ENCODE measurements at regions of chr11 and their contacts with region 1.

Region 1: GRCh38 chr11:5690216-5690615 is 626 bp downstream of the TRIM22 start:
- DNase-seq: no peak
- H3K4me3 ChIP-seq: peak overlapping the region; percentile 46
- CTCF ChIP-seq: no peak

Region 2: DNA sequence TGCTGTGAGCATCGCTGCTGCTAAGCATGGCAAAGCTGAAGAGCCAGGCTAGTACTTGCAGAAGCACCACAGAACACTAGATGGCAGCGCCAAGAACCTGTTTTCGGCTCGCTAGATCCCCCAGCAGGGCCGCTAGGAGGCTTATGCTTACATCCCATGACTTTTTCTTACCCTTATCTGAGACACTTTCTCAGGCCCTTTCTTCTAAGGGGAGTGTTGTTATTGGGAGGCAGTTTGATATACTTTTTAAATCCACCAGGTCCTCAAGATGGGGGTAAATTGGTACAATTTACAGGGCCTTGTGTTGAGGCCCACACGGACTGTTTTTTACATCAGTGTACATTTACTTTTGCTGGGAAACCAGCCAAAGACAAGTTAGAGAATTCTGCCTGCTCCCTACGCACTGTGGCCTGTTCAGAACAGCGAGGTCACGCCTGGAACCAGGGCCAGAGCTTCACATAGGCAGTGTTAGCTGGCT is 89.8 kb before region 1 on chr11:
- in situ Hi-C with region 1: loop called (anchors 5 kb)
- DNase-seq: peak; percentile 74
- H3K4me3 ChIP-seq: no peak overlapping the region
- CTCF ChIP-seq: peak; percentile 94

Region 3: GRCh38 chr11:5967708-5968107 is 277.5 kb after region 1 on chr11:
- in situ Hi-C with region 1: no loop called
- DNase-seq: no peak
- H3K4me3 ChIP-seq: no peak overlapping the region
- CTCF ChIP-seq: no peak